PC-3 (cell line): ENCODE measurements at regions of chr1 and their contacts with region 1.

Region 1: GRCh38 chr1:5915587-5916571 is 76.3 kb downstream of the NPHP4 start:
- DNase-seq: peak; percentile 69
- ATAC-seq: peak; percentile 87
- H3K4me3 ChIP-seq: no peak overlapping the region
- H3K27ac ChIP-seq: no peak overlapping the region
- H3K4me1 ChIP-seq: no peaks in the 10 kb centered on the region
- H3K27me3 ChIP-seq: no peaks in the 10 kb centered on the region
- CTCF ChIP-seq: peak; percentile 95

Region 2: DNA sequence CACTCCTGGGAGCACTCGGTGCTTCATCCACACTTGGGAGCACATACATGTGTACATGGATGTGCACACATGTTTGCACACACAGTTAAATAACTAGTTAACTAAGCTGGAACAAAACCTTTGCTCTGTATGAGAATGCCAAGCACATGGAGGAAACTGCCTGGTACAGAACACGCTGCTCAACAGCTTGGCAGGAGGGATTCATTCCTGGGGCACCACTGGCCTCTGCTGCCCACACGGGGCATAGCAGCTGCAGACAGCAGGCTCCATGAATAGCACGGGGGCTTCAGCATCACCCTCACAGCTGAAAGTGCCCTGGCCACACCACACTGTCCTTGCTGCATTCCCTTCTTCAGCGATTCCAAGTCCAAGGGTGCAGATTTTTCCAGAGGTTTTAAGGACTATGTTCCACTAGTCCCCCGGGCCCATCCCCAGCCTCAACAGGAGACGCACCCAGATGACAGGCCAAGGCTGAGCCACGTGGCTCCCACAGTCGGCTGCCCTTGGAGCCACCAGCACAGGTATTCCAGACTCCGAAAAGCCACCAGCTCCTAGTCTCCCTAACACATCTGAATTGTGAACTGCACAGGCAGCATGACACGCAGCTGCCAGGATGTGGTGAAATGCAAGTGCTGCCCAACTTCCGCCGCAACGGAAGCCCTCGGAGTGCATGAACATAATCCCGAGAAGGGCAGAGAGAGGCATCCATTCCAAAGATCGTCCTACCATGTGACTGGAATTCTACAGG is 59.4 kb after region 1 on chr1:
- CTCF ChIA-PET with region 1: no interaction called
- POLR2A ChIA-PET with region 1: no interaction called
- intact Hi-C with region 1: loop called (anchors 5 kb)
- DNase-seq: peak; percentile 64
- ATAC-seq: peak; percentile 94
- H3K4me3 ChIP-seq: no peak overlapping the region
- H3K27ac ChIP-seq: no peak overlapping the region
- H3K4me1 ChIP-seq: no peaks in the 10 kb centered on the region
- H3K27me3 ChIP-seq: no peaks in the 10 kb centered on the region
- CTCF ChIP-seq: peak; percentile 90